GM10248 (cell line): ENCODE measurements at regions of chr7 and their contacts with region 1.

Region 1: GRCh38 chr7:101717628-101718357 is 88.7 kb upstream of the MYL10 start:
- DNase-seq: no peak
- CTCF ChIP-seq: no peak

Region 2: GRCh38 chr7:101733713-101734475 is 16.1 kb after region 1 on chr7:
- CTCF ChIA-PET with region 1: interaction called, 6 read pairs
- POLR2A ChIA-PET with region 1: interaction called, 10 read pairs
- DNase-seq: peak; percentile 50
- CTCF ChIP-seq: no peak